ENCODE measurements at regions of chr5 and their contacts with region 1.

Region 1: DNA sequence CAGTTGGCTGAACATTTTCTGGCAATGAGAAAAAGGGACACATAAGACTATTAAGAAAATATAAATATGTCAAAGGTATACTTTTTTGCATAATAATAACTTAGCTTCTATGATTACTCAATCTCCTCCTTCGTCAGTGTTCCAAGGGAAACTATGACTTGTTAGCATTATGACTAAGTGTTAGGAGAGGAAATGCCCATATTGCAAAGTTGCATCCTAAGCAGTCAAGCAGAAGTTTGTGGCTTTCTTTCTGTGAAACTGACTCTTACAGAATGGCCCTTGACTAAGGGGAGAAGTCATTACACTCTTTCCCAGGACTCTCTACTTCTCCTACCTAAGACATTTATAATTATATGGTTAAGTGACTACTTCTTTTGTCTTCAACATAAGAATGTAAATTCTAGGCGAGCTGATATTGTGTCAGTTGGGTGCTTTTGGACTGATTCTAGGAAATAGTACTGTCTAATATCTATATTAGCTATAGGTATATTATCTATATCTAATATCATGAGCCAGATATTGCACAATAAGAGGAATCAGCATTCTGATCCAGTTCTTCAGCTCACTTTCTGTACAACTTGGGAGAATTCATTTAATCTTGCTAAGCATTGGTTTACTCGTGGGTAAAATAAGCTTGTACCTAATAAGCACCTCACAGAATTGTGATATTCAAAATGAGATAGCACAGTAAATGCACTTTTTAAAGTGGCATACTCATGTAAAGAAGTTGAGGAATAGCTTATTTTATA is 16.4 kb upstream of the SPINK6 start:
- DNase-seq: no peak
- H3K4me3 ChIP-seq: no peak overlapping the region
- H3K27ac ChIP-seq: no peak overlapping the region
- H3K4me1 ChIP-seq: no peaks in the 10 kb centered on the region
- H3K27me3 ChIP-seq: no peaks in the 10 kb centered on the region
- CTCF ChIP-seq: no peak
- EP300 ChIP-seq: no peak
- POLR2A ChIP-seq: no peak

Region 2: GRCh38 chr5:148374692-148375360 is 188.4 kb after region 1 on chr5:
- intact Hi-C with region 1: loop called (anchors 10 kb)
- DNase-seq: no peak
- H3K4me3 ChIP-seq: no peak overlapping the region
- H3K27ac ChIP-seq: no peak overlapping the region
- H3K4me1 ChIP-seq: peaks cover 0 to 4% (median 0%) of the 10 kb centered on the region in 4 donors
- H3K27me3 ChIP-seq: no peaks in the 10 kb centered on the region
- CTCF ChIP-seq: peak in 2 of 3 experiments; percentile 35 to 60
- EP300 ChIP-seq: no peak
- POLR2A ChIP-seq: no peak